ENCODE measurements at regions of chr1 and their contacts with region 1.

Region 1: DNA sequence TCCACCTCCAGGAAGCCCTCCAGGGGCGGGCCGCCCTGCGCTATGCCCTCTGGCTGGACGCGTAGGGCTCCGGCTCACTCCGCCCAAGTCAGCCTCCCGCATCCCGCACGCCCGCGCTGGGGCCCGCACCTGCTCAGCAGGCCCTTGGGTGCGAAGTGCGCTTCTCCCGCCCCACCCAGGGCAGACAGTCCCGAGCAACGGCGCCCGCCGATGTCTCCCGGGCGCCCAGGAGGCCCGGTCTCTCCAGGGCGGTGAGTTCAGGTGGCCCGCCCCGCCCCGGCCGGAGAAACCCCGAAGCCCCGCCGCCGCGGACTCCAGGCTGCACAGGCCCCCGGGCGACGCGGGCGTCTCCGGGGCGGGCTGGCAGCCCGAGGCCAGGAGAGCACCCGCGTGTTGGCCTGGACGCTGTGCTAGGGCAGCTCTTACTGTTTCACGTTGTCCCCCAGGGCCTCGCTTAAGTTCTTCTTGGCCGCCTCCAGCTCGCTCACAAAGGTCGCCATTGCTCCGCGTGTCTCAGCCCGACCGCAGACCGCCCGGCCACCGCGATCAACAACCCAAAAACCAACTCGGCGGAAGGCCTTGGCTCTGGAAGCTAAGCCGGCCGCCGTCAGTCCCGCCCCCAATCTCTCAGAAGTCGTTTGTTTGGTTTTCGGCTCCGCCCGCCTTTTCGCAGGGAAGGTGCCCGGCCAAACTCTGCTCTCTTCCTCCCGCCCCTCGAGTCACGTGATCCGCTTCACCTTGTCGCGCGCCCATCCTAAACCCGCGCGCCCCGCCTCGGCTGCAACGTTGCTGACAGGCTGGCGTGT is at the start of gene TADA1:
- DNase-seq: peak; percentile 94
- ATAC-seq: peak; percentile 93
- H3K4me3 Mint-ChIP-seq: peak within 1 kb of the TSS; percentile 96
- H3K27ac Mint-ChIP-seq: peak within 1 kb of the TSS; percentile 98
- H3K4me1 Mint-ChIP-seq: peaks cover 30% of the 10 kb centered on the region
- H3K27me3 Mint-ChIP-seq: no peaks in the 10 kb centered on the region
- CTCF ChIP-seq: no peak
- total RNA-seq, gene TADA1: 13.6 and 15.3 TPM in 2 replicates

Region 2: GRCh38 chr1:167721617-167722151 is 845.7 kb after region 1 on chr1 and contains the start of gene MPZL1:
- CTCF ChIA-PET with region 1: no interaction called
- POLR2A ChIA-PET with region 1: no interaction called
- intact Hi-C with region 1: loop called (anchors 5 kb)
- DNase-seq: peak; percentile 94
- ATAC-seq: peak; percentile 96
- H3K4me3 Mint-ChIP-seq: peak within 1 kb of the TSS; percentile 94
- H3K27ac Mint-ChIP-seq: peak within 1 kb of the TSS; percentile 96
- H3K4me1 Mint-ChIP-seq: peaks cover 77% of the 10 kb centered on the region
- H3K27me3 Mint-ChIP-seq: no peaks in the 10 kb centered on the region
- CTCF ChIP-seq: no peak
- total RNA-seq, gene MPZL1: 27.2 and 27.4 TPM in 2 replicates

Measured in activated B cell treated with CpG ODN at 0.5 μM for 24 hours (primary cell).